Posterior vena cava (tissue), 2 donors: ENCODE measurements at regions of chr1 and their contacts with region 1.

Region 1: GRCh38 chr1:31033596-31033995 is 31.9 kb downstream of the PUM1 start:
- DNase-seq: no peak

Region 2: DNA sequence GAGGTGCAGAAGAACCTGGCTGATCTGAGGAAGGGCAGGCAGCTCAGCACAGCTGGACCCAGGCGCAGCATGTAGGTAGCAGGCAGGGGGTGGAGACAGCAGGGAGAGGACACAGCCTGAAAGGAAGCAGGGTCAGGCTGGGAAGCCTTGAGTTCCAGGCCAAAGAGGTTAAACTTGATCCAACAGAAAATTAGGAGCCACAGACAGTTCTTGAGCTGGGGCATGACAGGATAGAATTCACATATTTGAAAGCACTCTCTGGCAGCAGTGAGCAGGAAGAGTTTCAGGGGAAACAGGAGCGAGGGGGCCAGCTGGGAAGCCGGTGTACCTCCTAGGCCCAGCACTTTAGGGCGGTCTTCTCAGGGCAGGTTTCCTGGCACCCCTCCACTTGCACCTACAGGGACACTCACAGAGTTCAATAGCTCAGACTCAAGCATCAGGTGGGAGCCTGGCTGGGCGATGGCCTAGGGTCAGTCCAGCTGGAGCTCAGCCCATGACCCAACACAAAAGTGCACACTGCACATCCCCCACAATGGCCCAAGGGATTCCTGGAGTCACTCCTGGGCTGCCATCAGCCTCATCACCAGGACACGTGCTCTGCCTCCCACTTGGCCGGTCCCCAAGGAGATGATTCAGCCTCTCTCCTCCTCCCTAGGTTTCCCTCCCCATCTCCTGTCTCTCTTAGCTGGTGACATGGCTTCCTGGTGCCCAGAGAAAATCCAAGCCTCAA is 332.9 kb before region 1 on chr1:
- intact Hi-C with region 1: no loop called
- DNase-seq: peak; percentile 88

Region 3: DNA sequence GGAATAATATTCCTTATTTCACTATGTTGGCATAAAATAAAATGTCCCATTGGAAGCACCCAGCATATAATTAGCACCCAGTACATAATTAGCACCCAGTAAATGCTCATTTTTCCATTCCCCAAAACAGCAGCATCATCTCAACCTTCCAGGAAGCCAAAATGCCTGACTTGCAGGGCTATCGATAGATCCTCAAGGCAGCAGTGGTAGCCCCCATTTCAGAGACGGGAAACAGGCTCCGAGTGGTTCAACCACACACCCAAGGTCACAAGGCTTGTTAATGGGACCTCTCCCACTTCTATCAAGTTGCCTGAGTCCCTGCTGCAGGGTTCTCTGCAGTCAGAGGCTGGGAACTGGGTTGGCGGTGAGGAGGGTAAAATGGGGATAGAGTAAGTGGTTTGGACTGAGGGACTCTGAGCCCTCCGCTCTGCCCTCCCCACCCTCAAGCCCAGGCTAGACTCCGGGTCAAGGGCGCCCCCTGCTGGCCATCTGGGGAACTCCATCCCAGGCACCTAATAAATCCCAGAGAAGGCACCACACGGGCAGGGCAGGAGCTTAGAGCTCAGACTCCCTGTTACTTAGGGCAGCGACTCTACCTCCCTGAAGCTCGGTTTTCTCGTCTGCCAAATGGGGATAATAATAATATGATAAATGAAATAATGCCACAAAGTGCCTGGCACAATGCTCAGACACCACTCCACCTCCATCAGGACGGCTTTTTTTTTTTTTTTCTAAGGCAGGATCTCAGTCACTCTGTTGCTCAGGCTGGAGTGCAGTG is 254.1 kb before region 1 on chr1:
- intact Hi-C with region 1: no loop called
- DNase-seq: peak; percentile 95

Region 4: GRCh38 chr1:31084782-31085569 is 51.4 kb after region 1 on chr1:
- intact Hi-C with region 1: no loop called
- DNase-seq: peak; percentile 17

Region 5: DNA sequence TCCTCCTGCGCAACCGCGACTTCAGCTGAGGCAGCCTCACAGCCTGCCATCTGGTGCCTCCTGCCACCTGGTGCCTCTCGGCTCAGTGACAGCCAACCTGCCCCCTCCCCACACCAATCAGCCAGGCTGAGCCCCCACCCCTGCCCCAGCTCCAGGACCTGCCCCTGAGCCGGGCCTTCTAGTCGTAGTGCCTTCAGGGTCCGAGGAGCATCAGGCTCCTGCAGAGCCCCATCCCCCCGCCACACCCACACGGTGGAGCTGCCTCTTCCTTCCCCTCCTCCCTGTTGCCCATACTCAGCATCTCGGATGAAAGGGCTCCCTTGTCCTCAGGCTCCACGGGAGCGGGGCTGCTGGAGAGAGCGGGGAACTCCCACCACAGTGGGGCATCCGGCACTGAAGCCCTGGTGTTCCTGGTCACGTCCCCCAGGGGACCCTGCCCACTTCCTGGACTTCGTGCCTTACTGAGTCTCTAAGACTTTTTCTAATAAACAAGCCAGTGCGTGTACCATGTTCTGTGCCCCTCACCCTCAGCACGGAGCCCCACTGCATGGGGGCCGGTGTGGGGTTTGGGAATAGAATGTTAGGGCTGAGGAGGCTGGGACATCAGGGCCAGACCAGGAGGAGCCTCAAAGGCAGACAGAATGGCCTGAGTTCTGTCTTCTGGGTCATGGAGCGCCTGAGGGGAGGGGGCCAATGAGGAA is 400.7 kb after region 1 on chr1:
- intact Hi-C with region 1: loop called in 1 of 2 experiments (anchors 5 kb)
- DNase-seq: peak; percentile 78